ENCODE measurements at regions of chr7 and their contacts with region 1.

Region 1: DNA sequence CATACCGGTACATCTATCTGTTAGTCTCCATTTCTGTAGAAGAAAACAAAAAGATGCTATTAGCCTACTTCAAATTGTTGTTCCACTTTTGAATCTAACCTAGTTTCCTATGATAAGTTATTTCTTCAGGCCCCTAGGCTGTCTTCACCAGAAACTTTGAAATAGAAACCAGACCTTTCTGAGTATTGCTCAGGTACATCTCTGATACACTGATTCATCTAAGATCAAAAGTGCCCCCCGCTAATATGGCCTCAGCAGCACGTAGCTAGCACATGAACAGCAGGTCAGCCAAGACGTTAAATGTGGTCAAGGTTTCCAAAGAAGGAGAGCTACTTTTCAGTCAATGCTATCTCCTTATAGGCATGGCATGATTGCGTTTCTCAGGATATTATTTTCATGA is 23.6 kb downstream of the CTAGE6 start:
- DNase-seq: no peak
- H3K4me3 ChIP-seq: no peak overlapping the region
- H3K27ac ChIP-seq: no peak overlapping the region
- H3K4me1 ChIP-seq: no peaks in the 10 kb centered on the region
- H3K27me3 ChIP-seq: no peaks in the 10 kb centered on the region
- CTCF ChIP-seq: no peak
- POLR2A ChIP-seq: no peak

Region 2: GRCh38 chr7:144020360-144020759 is 286.5 kb after region 1 on chr7:
- intact Hi-C with region 1: loop called in 1 of 2 experiments (anchors 5 kb)
- DNase-seq: peak in 2 of 7 donors; percentile 11 to 26
- H3K4me3 ChIP-seq: no peak overlapping the region
- H3K27ac ChIP-seq: peak overlapping the region in 4 of 5 donors; percentile 61 to 81 (median 72)
- H3K4me1 ChIP-seq: peaks cover 26 to 31% of the 10 kb centered on the region in 2 donors
- H3K27me3 ChIP-seq: no peaks in the 10 kb centered on the region
- CTCF ChIP-seq: no peak
- POLR2A ChIP-seq: no peak

Measured in adrenal gland (tissue), 19 donors.